ENCODE measurements at regions of chr6 and their contacts with region 1.

Region 1: DNA sequence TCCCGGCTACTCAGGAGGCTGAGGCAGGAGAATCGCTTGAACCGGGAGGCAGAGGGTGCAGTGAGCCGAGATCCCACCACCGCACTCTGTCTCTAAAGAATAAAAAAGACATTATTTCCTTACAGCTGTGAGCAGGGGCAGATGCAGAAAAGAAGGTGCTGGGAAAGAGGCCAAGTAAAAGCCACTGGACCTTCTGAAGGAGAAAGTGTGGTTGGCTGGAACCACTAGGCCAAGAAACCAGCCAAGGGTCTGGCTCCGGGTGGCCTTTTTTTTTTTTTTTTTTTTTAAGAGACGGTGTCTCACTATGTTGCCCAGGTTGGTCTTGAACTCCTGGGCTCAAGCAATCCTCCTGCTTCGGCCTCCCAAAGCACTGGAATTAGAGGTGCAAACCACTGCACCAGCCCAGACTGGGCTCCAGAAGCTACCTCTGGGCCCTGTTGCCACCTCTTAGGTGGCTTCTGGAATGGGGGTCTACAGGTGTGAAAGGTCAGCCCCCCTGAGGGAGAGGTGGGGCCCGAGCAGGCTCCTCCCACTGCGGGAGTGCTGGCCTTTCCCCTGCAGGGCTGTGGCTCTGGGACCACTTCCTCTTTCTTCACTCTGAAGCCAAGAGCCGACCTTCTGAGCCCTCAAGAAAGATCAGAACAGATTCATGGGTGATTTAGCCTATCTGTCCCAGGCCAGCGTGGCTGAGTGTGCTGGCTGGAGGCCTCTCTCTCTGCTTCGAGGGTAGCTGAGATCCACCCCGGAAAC is at the start of gene FGD2:
- DNase-seq: peak; percentile 89
- ATAC-seq: peak; percentile 72
- H3K4me3 ChIP-seq: peak within 1 kb of the TSS; percentile 82 to 97 (median 89)
- H3K4me3 Mint-ChIP-seq: peak within 1 kb of the TSS; percentile 96
- H3K27ac ChIP-seq: peak within 1 kb of the TSS; percentile 80 to 92
- H3K27ac Mint-ChIP-seq: peak within 1 kb of the TSS; percentile 95
- H3K4me1 ChIP-seq: peaks cover 56 to 79% of the 10 kb centered on the region in 2 donors
- H3K4me1 Mint-ChIP-seq: peaks cover 82% of the 10 kb centered on the region
- H3K27me3 ChIP-seq: no peaks in the 10 kb centered on the region
- H3K27me3 Mint-ChIP-seq: no peaks in the 10 kb centered on the region
- CTCF ChIP-seq: no peak
- total RNA-seq, gene FGD2: 352 and 360 TPM in 2 replicates

Region 2: DNA sequence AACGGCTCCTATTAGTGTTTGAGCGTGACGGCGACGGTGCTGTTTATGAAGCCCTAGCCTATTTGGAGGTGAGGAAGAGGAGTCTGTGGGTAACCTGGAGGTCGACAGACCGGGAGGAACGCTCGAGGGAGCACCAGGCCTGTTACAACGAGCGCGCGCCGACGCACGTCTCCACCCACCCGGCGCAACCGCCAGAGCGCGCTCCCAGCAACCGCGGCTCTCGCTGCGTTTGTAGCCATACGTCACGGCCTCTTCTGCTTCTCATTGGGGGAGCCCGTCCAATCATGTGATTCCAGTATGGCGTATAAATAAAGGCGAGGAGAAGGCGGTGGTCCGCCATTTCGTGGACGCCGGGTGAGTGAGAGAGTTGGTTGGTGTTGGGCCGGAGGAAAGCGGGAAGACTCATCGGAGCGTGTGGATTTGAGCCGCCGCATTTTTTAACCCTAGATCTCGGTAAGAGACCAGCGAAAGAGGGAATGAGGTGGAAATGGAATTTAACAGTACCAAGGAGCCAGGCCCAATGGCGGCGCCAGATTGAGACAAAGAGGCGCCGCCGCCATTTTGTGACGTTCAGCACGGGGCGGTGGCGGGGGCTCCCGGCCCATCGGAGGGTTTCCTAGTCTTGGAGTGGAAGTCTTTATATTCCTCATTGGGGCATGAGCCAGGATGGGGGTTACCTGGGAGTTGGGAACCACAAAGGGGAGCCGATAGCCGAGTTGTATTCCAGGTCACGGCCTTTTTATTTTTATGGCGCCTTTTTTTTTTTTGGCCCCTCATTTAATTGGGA is 411.0 kb before region 1 on chr6 and contains the start of gene SRSF3:
- CTCF ChIA-PET with region 1: no interaction called
- POLR2A ChIA-PET with region 1: no interaction called
- intact Hi-C with region 1: loop called (anchors 10 kb)
- DNase-seq: peak; percentile 99
- ATAC-seq: peak; percentile 91
- H3K4me3 ChIP-seq: peak within 1 kb of the TSS; percentile 91 to 100 (median 97)
- H3K4me3 Mint-ChIP-seq: peak within 1 kb of the TSS; percentile 90
- H3K27ac ChIP-seq: peak within 1 kb of the TSS; percentile 93 to 99
- H3K27ac Mint-ChIP-seq: peak within 1 kb of the TSS; percentile 97
- H3K4me1 ChIP-seq: peaks cover 44 to 55% of the 10 kb centered on the region in 2 donors
- H3K4me1 Mint-ChIP-seq: peaks cover 48% of the 10 kb centered on the region
- H3K27me3 ChIP-seq: no peaks in the 10 kb centered on the region
- H3K27me3 Mint-ChIP-seq: no peaks in the 10 kb centered on the region
- CTCF ChIP-seq: peak; percentile 29
- total RNA-seq, gene SRSF3: 316 and 331 TPM in 2 replicates

Region 3: DNA sequence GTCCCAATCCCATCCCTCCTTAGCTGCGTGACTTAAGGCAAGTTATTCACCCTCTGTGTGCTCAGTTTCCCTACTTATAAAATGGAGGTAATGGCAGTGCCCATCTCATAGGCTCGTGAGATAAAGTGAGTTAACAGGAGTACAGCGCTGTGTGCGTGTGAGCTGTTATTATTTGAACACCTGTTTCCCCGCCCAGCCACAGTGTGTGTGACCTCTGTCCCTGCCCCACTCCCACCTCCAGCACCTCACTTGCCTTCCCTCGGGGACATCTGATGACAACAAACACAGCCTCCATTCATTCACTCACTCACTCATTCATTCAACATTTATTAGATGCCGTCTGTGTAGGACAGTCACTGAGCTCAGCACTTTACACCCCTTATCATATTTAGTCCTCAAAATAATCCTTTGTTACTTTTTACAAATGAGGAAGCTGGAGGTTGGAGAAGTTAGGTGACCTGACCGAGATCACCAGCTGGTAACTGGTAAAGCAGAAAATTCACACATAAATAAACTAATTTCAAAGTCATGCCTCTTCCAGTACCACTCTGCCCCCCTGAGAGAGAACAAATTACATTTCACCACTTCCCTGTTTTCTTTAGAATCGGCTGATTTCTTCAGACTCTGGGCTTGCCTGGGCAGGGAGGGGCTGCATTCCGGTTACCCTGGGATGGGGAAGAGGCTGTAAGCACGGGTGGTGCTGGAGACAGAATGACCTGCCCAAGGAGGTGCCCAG is 224.6 kb before region 1 on chr6:
- CTCF ChIA-PET with region 1: no interaction called
- POLR2A ChIA-PET with region 1: no interaction called
- intact Hi-C with region 1: no loop called
- DNase-seq: peak; percentile 54
- ATAC-seq: peak; percentile 42
- H3K4me3 ChIP-seq: no peak overlapping the region
- H3K4me3 Mint-ChIP-seq: peak overlapping the region; percentile 64
- H3K27ac ChIP-seq: peak overlapping the region in 1 of 2 donors; percentile 10
- H3K27ac Mint-ChIP-seq: peak overlapping the region; percentile 71
- H3K4me1 ChIP-seq: peaks cover 21 to 28% of the 10 kb centered on the region in 2 donors
- H3K4me1 Mint-ChIP-seq: peaks cover 27% of the 10 kb centered on the region
- H3K27me3 ChIP-seq: peaks cover 0 to 9% (median 0%) of the 10 kb centered on the region in 4 experiments
- H3K27me3 Mint-ChIP-seq: peaks cover 17% of the 10 kb centered on the region
- CTCF ChIP-seq: no peak

Region 4: GRCh38 chr6:36885461-36886401 is 119.5 kb before region 1 on chr6 and contains the start of gene C6orf89:
- CTCF ChIA-PET with region 1: interaction called, 11 read pairs
- POLR2A ChIA-PET with region 1: no interaction called
- intact Hi-C with region 1: loop called (anchors 1 kb)
- DNase-seq: peak; percentile 98
- ATAC-seq: peak; percentile 99
- H3K4me3 ChIP-seq: peak within 1 kb of the TSS; percentile 68 to 89 (median 80)
- H3K4me3 Mint-ChIP-seq: peak within 1 kb of the TSS; percentile 90
- H3K27ac ChIP-seq: peak within 1 kb of the TSS; percentile 82 to 92
- H3K27ac Mint-ChIP-seq: peak within 1 kb of the TSS; percentile 92
- H3K4me1 ChIP-seq: peaks cover 17 to 22% of the 10 kb centered on the region in 2 donors
- H3K4me1 Mint-ChIP-seq: peaks cover 32% of the 10 kb centered on the region
- H3K27me3 ChIP-seq: no peaks in the 10 kb centered on the region
- H3K27me3 Mint-ChIP-seq: no peaks in the 10 kb centered on the region
- CTCF ChIP-seq: peak; percentile 86
- total RNA-seq, gene C6orf89: 34.2 and 35.3 TPM in 2 replicates

Region 5: DNA sequence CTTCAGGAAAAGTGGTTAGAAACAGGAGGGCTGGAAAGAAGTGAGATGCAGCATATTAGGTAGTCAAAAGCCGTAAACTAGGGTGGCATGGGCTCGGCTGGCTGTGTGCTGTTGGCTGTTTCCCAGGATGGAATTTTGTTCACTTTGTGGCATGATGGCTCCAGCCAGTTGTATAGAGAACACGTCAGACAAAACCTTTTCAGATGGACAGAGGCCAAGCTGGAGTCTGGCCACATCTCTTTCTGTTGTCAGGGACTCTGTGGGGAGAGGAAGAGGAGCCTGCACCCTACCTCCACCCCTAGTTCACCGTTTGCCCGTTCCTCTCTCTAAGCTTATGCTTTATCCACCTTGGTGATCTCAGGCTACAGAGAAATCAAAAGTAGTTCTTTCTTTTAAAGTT is 97.5 kb before region 1 on chr6:
- CTCF ChIA-PET with region 1: no interaction called
- POLR2A ChIA-PET with region 1: no interaction called
- intact Hi-C with region 1: no loop called
- DNase-seq: no peak
- ATAC-seq: no peak
- H3K4me3 ChIP-seq: no peak overlapping the region
- H3K4me3 Mint-ChIP-seq: no peak overlapping the region
- H3K27ac ChIP-seq: no peak overlapping the region
- H3K27ac Mint-ChIP-seq: no peak overlapping the region
- H3K4me1 ChIP-seq: peaks cover 13% of the 10 kb centered on the region in 2 donors
- H3K4me1 Mint-ChIP-seq: peaks cover 14% of the 10 kb centered on the region
- H3K27me3 ChIP-seq: no peaks in the 10 kb centered on the region
- H3K27me3 Mint-ChIP-seq: no peaks in the 10 kb centered on the region
- CTCF ChIP-seq: no peak

Region 6: GRCh38 chr6:36979347-36979742 is 25.9 kb before region 1 on chr6:
- CTCF ChIA-PET with region 1: interaction called, 22 read pairs
- POLR2A ChIA-PET with region 1: interaction called, 3 read pairs
- intact Hi-C with region 1: loop called (anchors 1 kb)
- DNase-seq: peak; percentile 42
- ATAC-seq: no peak
- H3K4me3 ChIP-seq: no peak overlapping the region
- H3K4me3 Mint-ChIP-seq: no peak overlapping the region
- H3K27ac ChIP-seq: no peak overlapping the region
- H3K27ac Mint-ChIP-seq: peak overlapping the region; percentile 47
- H3K4me1 ChIP-seq: peaks cover 16 to 17% of the 10 kb centered on the region in 2 donors
- H3K4me1 Mint-ChIP-seq: peaks cover 37% of the 10 kb centered on the region
- H3K27me3 ChIP-seq: no peaks in the 10 kb centered on the region
- H3K27me3 Mint-ChIP-seq: no peaks in the 10 kb centered on the region
- CTCF ChIP-seq: no peak

Region 7: GRCh38 chr6:37051138-37052026 is 46.1 kb after region 1 on chr6:
- CTCF ChIA-PET with region 1: interaction called, 14 read pairs
- POLR2A ChIA-PET with region 1: interaction called, 14 read pairs
- intact Hi-C with region 1: loop called (anchors 1 kb)
- DNase-seq: peak; percentile 92
- ATAC-seq: peak; percentile 44
- H3K4me3 ChIP-seq: peak overlapping the region in 1 of 5 experiments; percentile 59
- H3K4me3 Mint-ChIP-seq: peak overlapping the region; percentile 71
- H3K27ac ChIP-seq: peak overlapping the region; percentile 91 to 98
- H3K27ac Mint-ChIP-seq: peak overlapping the region; percentile 85
- H3K4me1 ChIP-seq: peaks cover 45 to 54% of the 10 kb centered on the region in 2 donors
- H3K4me1 Mint-ChIP-seq: peaks cover 52% of the 10 kb centered on the region
- H3K27me3 ChIP-seq: no peaks in the 10 kb centered on the region
- H3K27me3 Mint-ChIP-seq: no peaks in the 10 kb centered on the region
- CTCF ChIP-seq: peak; percentile 91

Region 8: GRCh38 chr6:37283671-37284151 is 278.5 kb after region 1 on chr6:
- CTCF ChIA-PET with region 1: no interaction called
- POLR2A ChIA-PET with region 1: no interaction called
- intact Hi-C with region 1: no loop called
- DNase-seq: no peak
- ATAC-seq: no peak
- H3K4me3 ChIP-seq: no peak overlapping the region
- H3K4me3 Mint-ChIP-seq: no peak overlapping the region
- H3K27ac ChIP-seq: no peak overlapping the region
- H3K27ac Mint-ChIP-seq: no peak overlapping the region
- H3K4me1 ChIP-seq: peaks cover 0 to 4% of the 10 kb centered on the region in 2 donors
- H3K4me1 Mint-ChIP-seq: peaks cover 10% of the 10 kb centered on the region
- H3K27me3 ChIP-seq: no peaks in the 10 kb centered on the region
- H3K27me3 Mint-ChIP-seq: no peaks in the 10 kb centered on the region
- CTCF ChIP-seq: no peak

Region 9: GRCh38 chr6:37302086-37302686 is 296.9 kb after region 1 on chr6:
- CTCF ChIA-PET with region 1: no interaction called
- POLR2A ChIA-PET with region 1: no interaction called
- intact Hi-C with region 1: no loop called
- DNase-seq: no peak
- ATAC-seq: no peak
- H3K4me3 ChIP-seq: no peak overlapping the region
- H3K4me3 Mint-ChIP-seq: no peak overlapping the region
- H3K27ac ChIP-seq: no peak overlapping the region
- H3K27ac Mint-ChIP-seq: no peak overlapping the region
- H3K4me1 ChIP-seq: peaks cover 0 to 8% of the 10 kb centered on the region in 2 donors
- H3K4me1 Mint-ChIP-seq: peaks cover 10% of the 10 kb centered on the region
- H3K27me3 ChIP-seq: no peaks in the 10 kb centered on the region
- H3K27me3 Mint-ChIP-seq: no peaks in the 10 kb centered on the region
- CTCF ChIP-seq: no peak

Measured in B cell (primary cell).